Panc1 (cell line): ENCODE measurements at regions of chr1 and their contacts with region 1.

Region 1: GRCh38 chr1:32521165-32521564 is 18.1 kb upstream of the ZBTB8A start:
- DNase-seq: no peak
- ATAC-seq: peak; percentile 39
- H3K4me3 ChIP-seq: peak overlapping the region in 1 of 2 experiments; percentile 56; a peak in 1 of 4 replicates
- H3K27ac ChIP-seq: no peak overlapping the region
- H3K4me1 ChIP-seq: no peaks in the 10 kb centered on the region
- H3K27me3 ChIP-seq: no peaks in the 10 kb centered on the region
- CTCF ChIP-seq: no peak

Region 2: DNA sequence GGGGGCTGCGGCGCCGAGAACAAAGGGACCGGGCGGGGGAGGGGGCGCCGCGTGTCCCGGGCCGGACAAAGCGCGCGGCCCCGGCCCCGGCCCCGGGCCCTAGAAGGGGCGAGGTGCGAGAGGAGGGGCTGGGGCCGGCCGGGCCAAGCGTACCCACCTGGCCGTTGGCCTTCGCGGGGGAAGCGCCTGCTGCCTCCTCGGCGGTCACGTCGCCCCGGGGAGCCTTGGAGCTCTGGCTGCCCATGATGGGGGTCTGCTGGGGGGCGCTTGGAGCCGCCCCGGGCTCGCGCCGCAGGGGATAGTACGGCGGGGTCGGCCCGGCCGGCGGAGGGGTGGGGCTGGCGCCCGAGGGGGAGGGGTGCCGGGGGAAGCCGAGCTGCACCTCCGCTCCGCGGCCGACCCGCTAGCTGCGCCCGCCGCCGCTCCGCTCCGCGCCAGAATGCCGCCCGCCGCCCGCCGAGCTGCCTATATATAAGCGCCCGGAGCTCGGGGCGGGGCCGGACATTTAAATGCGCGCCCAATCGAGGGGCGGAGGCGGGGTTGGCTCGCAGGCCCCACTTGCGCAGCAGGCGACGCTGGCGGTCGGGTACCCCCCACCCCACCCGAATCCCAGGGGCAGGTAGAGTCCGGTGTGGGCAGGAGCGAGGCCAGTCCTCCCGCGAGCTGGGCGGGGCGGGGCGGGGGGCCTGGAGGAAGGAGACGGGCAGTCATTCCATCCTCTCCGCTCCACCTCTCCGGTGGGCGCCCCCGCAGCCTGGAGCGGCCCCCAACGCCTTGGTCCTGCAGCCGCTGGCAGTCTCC is 185.2 kb before region 1 on chr1 and contains the start of gene MARCKSL1:
- CTCF ChIA-PET with region 1: no interaction called
- POLR2A ChIA-PET with region 1: interaction called, 15 read pairs
- in situ Hi-C with region 1: no loop called
- intact Hi-C with region 1: no loop called
- DNase-seq: no peak
- ATAC-seq: peak; percentile 70
- H3K4me3 ChIP-seq: peak within 1 kb of the TSS; percentile 68 to 70
- H3K27ac ChIP-seq: peak within 1 kb of the TSS; percentile 78
- H3K4me1 ChIP-seq: peaks cover 46% of the 10 kb centered on the region
- H3K27me3 ChIP-seq: no peaks in the 10 kb centered on the region
- CTCF ChIP-seq: no peak
- total RNA-seq, gene MARCKSL1: 176 TPM

Region 3: GRCh38 chr1:32448773-32449456 is 72.2 kb before region 1 on chr1:
- CTCF ChIA-PET with region 1: interaction called, 10 read pairs
- POLR2A ChIA-PET with region 1: no interaction called
- in situ Hi-C with region 1: no loop called
- intact Hi-C with region 1: no loop called
- DNase-seq: no peak
- ATAC-seq: peak; percentile 74
- H3K4me3 ChIP-seq: no peak overlapping the region
- H3K27ac ChIP-seq: no peak overlapping the region
- H3K4me1 ChIP-seq: peaks cover 5% of the 10 kb centered on the region; the same call in 1 of the 2 replicates
- H3K27me3 ChIP-seq: no peaks in the 10 kb centered on the region
- CTCF ChIP-seq: peak; percentile 69

Region 4: GRCh38 chr1:32464716-32465577 is 56.2 kb before region 1 on chr1 and contains the start of gene ZBTB8B:
- CTCF ChIA-PET with region 1: interaction called, 12 read pairs
- POLR2A ChIA-PET with region 1: no interaction called
- in situ Hi-C with region 1: no loop called
- intact Hi-C with region 1: no loop called
- DNase-seq: no peak
- ATAC-seq: peak; percentile 94
- H3K4me3 ChIP-seq: peak within 1 kb of the TSS; percentile 53 to 62
- H3K27ac ChIP-seq: no peak within 1 kb of the TSS
- H3K4me1 ChIP-seq: 0 out of 2 replicates have a peak, but pooled peaks cover 5% of the 10 kb centered on the region
- H3K27me3 ChIP-seq: peaks cover 13% of the 10 kb centered on the region
- CTCF ChIP-seq: no peak
- total RNA-seq, gene ZBTB8B: 0.08 TPM

Region 5: GRCh38 chr1:32612189-32612881 is 91.2 kb after region 1 on chr1:
- CTCF ChIA-PET with region 1: interaction called, 3 read pairs
- POLR2A ChIA-PET with region 1: no interaction called
- in situ Hi-C with region 1: no loop called
- intact Hi-C with region 1: loop called (anchors 10 kb)
- DNase-seq: peak; percentile 69
- ATAC-seq: peak; percentile 100
- H3K4me3 ChIP-seq: peak overlapping the region; percentile 54 to 85
- H3K27ac ChIP-seq: peak overlapping the region; percentile 76
- H3K4me1 ChIP-seq: peaks cover 5% of the 10 kb centered on the region; the same call in 1 of the 2 replicates
- H3K27me3 ChIP-seq: no peaks in the 10 kb centered on the region
- CTCF ChIP-seq: no peak

Region 6: DNA sequence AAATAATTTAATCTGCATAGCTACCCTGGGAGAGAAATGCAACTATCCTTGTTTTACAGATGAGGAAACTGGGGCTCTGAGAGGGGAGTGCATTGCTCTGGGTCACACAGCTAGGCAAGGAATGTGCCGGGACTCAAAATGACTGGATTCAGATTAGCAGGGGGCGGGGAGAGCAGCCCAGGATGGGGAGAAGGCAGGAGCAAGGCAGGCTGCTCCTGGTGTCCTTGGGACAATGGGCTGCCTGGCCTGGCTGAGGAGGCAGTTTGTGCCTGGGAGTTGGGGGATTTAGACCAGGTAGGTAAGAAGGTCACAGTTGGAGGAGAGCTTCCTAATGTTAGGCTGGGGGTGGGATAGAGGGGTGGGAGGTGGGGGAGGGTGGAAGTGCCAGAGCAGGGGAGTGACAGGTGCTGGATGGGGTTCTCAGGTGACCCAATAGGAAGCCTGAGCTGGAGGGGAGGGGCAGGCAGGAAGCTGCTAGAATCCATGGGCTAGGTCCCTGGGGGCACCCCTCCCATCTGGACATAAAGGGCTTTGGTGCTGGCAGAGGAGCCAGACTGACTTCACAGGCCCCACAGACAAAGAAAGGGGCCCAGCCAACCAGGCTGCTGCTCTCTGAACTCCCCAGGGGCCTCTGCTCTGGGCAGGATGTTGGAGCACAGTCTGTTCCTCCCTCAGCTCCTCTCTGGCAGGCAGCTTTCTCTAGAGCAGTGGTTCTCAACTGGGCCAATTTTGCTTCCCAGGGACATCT is 631.7 kb after region 1 on chr1:
- CTCF ChIA-PET with region 1: no interaction called
- POLR2A ChIA-PET with region 1: no interaction called
- in situ Hi-C with region 1: no loop called
- intact Hi-C with region 1: no loop called
- DNase-seq: no peak
- ATAC-seq: 0 out of 2 replicates have a peak, but pooled peaks have one; percentile 21
- H3K4me3 ChIP-seq: no peak overlapping the region
- H3K27ac ChIP-seq: no peak overlapping the region
- H3K4me1 ChIP-seq: no peaks in the 10 kb centered on the region
- H3K27me3 ChIP-seq: no peaks in the 10 kb centered on the region
- CTCF ChIP-seq: no peak